Mammary epithelial cell (primary cell): ENCODE measurements at regions of chr10 and their contacts with region 1.

Region 1: DNA sequence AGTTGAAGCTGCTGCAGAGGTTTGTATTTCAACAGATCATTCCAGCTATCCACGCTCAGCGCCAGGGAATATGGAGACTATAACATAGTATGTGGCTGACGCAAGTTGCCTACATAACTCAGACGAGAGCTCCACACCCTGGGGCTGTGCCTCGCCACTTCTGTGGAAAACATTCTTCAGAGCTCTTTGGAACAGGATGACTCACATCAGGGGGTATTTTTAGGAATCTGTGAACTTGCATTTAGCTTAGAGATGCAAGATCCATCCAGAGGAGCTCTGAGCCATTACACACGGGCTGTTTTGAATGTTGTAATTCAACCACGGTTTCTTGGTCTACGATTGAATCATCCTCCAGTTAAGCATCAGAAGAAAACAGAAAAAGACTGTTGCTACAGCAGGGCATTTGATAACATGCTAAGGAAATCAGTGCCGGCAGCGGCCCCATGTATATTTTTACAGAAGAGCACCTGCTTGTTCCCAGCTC is 481.5 kb upstream of the AKR1E2 start:
- DNase-seq: peak; percentile 99
- H3K4me3 ChIP-seq: no peak overlapping the region
- H3K27ac ChIP-seq: peak overlapping the region; percentile 90
- H3K4me1 ChIP-seq: peaks cover 16% of the 10 kb centered on the region
- H3K27me3 ChIP-seq: no peaks in the 10 kb centered on the region
- CTCF ChIP-seq: no peak

Region 2: DNA sequence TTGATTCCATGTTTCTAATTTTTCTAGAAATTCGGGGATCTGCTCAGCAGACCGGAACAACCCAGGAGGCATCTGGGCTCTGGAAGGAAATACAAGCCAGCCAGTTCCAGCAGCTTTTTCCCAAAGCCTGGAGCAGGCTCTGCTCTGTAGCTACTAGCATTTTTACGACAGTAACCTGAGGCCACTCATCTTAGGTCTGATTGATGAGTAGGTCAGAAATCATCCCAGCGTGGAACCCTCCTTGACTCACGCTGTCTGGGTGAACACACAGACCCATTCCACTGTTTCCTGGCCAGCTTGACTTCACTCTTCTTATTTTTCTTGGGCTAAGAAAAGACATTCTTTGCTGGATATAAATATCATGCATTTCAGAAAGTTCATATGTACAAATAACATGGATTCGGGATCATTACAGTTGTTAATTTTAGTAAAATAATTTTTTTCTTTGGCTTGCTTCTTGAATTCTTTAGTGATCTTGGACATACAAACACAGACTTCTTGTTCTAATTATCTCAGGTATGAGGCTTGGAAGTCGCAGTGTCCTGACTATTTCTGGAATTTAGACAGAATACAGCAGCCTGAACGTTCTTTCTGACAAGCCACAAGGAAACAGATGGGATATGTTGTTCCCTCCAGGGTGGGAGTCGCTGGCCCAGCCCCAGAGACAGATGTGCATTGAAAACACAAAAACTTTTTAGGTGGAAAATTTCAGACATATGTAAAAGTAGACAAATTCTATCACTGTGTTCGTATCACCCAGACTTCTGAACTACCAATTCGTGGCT is 1117.4 kb before region 1 on chr10:
- CTCF ChIA-PET with region 1: no interaction called
- dilution Hi-C with region 1: no loop called
- in situ Hi-C with region 1: no loop called
- intact Hi-C with region 1: loop called (anchors 10 kb)
- DNase-seq: peak; percentile 87
- H3K4me3 ChIP-seq: peak overlapping the region in 1 of 3 experiments; percentile 2
- H3K27ac ChIP-seq: peak overlapping the region; percentile 81
- H3K4me1 ChIP-seq: peaks cover 32% of the 10 kb centered on the region
- H3K27me3 ChIP-seq: no peaks in the 10 kb centered on the region
- CTCF ChIP-seq: no peak

Region 3: DNA sequence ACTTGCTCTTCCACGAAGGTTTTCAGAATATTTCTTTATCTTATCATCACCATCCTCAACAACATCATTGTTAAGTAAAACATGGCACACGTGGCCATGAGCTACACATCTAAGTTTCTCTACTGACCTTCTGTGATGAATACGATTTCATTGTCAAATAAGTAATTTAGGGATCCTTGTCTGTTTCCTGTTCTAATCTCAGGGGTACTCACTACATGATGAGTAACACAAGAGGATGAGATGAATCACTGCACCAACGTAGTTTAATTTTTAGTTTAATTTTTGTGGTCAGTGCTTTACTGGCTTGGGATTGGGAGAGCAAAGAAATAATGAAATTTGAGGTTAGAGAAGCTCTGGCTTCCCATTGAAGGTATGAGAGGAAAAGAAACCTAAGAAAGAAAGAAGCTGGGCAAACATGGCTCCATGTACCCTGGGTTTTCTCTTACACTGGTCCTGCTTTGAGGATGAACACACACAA is 97.6 kb before region 1 on chr10:
- CTCF ChIA-PET with region 1: interaction called, 3 read pairs
- dilution Hi-C with region 1: loop called (anchors 5 kb)
- in situ Hi-C with region 1: loop called in 1 of 2 experiments (anchors 10 kb)
- intact Hi-C with region 1: loop called (anchors 2 kb)
- DNase-seq: peak; percentile 91
- H3K4me3 ChIP-seq: no peak overlapping the region
- H3K27ac ChIP-seq: peak overlapping the region; percentile 83
- H3K4me1 ChIP-seq: peaks cover 56% of the 10 kb centered on the region
- H3K27me3 ChIP-seq: no peaks in the 10 kb centered on the region
- CTCF ChIP-seq: no peak

Region 4: GRCh38 chr10:4254101-4254994 is 90.2 kb before region 1 on chr10:
- CTCF ChIA-PET with region 1: no interaction called
- dilution Hi-C with region 1: loop called (anchors 5 kb)
- in situ Hi-C with region 1: loop called in 1 of 2 experiments (anchors 10 kb)
- intact Hi-C with region 1: no loop called
- DNase-seq: peak; percentile 58
- H3K4me3 ChIP-seq: no peak overlapping the region
- H3K27ac ChIP-seq: no peak overlapping the region
- H3K4me1 ChIP-seq: peaks cover 16% of the 10 kb centered on the region
- H3K27me3 ChIP-seq: no peaks in the 10 kb centered on the region
- CTCF ChIP-seq: no peak

Region 5: GRCh38 chr10:4319870-4320367 is 24.6 kb before region 1 on chr10:
- CTCF ChIA-PET with region 1: no interaction called
- dilution Hi-C with region 1: no loop called
- in situ Hi-C with region 1: no loop called
- intact Hi-C with region 1: no loop called
- DNase-seq: no peak
- H3K4me3 ChIP-seq: no peak overlapping the region
- H3K27ac ChIP-seq: no peak overlapping the region
- H3K4me1 ChIP-seq: peaks cover 8% of the 10 kb centered on the region
- H3K27me3 ChIP-seq: no peaks in the 10 kb centered on the region
- CTCF ChIP-seq: no peak